Activated T-helper 2 cell treated with anti-CD3 and anti-CD28 coated beads, Interferon-gamma antibody, Interleukin-2, Interleukin-4, amounts not matched to agents 10 μg/mL and 5 μg/mL and 100 μg/mL, durations not matched to agents 14 hours and 24 hours and 36 hours (primary cell): ENCODE measurements at regions of chr9 and their contacts with region 1.

Region 1: GRCh38 chr9:132669698-132670456 is at the start of gene DDX31:
- DNase-seq: peak; percentile 81
- H3K4me3 Mint-ChIP-seq: peak within 1 kb of the TSS; percentile 93
- H3K27ac Mint-ChIP-seq: peak within 1 kb of the TSS; percentile 83
- H3K4me1 Mint-ChIP-seq: peaks cover 33% of the 10 kb centered on the region
- H3K27me3 Mint-ChIP-seq: no peaks in the 10 kb centered on the region
- total RNA-seq, gene DDX31: 24.7 and 25.7 TPM in 2 replicates

Region 2: GRCh38 chr9:132768932-132769905 is 99.3 kb after region 1 on chr9:
- intact Hi-C with region 1: loop called (anchors 2 kb)
- DNase-seq: peak; percentile 56
- H3K4me3 Mint-ChIP-seq: peak overlapping the region; percentile 94
- H3K27ac Mint-ChIP-seq: peak overlapping the region; percentile 97
- H3K4me1 Mint-ChIP-seq: peaks cover 24% of the 10 kb centered on the region
- H3K27me3 Mint-ChIP-seq: peaks cover 15% of the 10 kb centered on the region

Region 3: GRCh38 chr9:132877824-132878694 is 208.2 kb after region 1 on chr9 and contains the start of gene AK8:
- intact Hi-C with region 1: loop called (anchors 2 kb)
- DNase-seq: peak; percentile 72
- H3K4me3 Mint-ChIP-seq: peak within 1 kb of the TSS; percentile 78
- H3K27ac Mint-ChIP-seq: peak within 1 kb of the TSS; percentile 71
- H3K4me1 Mint-ChIP-seq: peaks cover 25% of the 10 kb centered on the region
- H3K27me3 Mint-ChIP-seq: peaks cover 4% of the 10 kb centered on the region
- total RNA-seq, gene AK8: not detected in 2 replicates